Mucosa of descending colon (tissue), 3 donors: ENCODE measurements at regions of chr16 and their contacts with region 1.

Region 1: GRCh38 chr16:16127469-16128116 is 95.7 kb downstream of the ABCC6 start:
- DNase-seq: peak in 2 of 3 donors; percentile 76 to 77
- ATAC-seq: peak; percentile 96
- H3K4me3 ChIP-seq: no peak overlapping the region
- H3K4me1 ChIP-seq: no peaks in the 10 kb centered on the region
- CTCF ChIP-seq: peak; percentile 89

Region 2: GRCh38 chr16:15874745-15875314 is 252.8 kb before region 1 on chr16:
- intact Hi-C with region 1: loop called (anchors 10 kb)
- DNase-seq: peak in 2 of 3 donors; percentile 50 to 79
- ATAC-seq: peak; percentile 88
- H3K4me3 ChIP-seq: no peak overlapping the region
- H3K4me1 ChIP-seq: no peaks in the 10 kb centered on the region
- CTCF ChIP-seq: peak; percentile 20

Region 3: DNA sequence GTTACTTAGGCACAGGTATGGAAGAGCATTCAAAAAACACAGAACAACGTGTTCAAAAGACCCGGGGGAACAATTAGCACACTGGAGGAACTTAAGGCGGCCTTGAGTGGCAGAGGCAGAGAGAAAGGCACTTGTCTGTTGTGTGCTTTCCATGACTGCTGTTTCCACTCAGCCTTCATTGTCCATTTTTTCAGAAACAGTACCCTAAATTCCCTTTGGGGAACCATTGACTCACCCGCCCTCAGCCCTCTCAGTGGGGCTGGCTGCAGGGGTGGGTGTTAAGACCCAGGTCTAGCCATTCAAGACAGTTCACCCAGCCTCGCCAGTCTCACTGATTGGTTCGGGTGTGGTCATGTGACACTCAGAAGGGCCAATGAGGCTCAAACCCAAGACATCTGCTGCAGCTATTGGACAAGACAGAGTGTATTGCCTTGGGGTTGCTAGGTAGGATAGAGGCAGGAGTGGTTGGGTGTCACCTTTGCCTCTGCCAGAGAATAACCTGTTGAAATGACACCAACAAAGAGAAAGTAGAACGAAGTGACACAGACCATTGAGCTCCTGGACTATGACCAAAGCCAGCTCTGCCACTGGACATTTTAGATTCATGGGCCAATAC is 219.6 kb before region 1 on chr16:
- intact Hi-C with region 1: no loop called
- DNase-seq: no peak
- ATAC-seq: peak; percentile 97
- H3K4me3 ChIP-seq: no peak overlapping the region
- H3K4me1 ChIP-seq: peaks cover 2% of the 10 kb centered on the region
- CTCF ChIP-seq: no peak

Region 4: DNA sequence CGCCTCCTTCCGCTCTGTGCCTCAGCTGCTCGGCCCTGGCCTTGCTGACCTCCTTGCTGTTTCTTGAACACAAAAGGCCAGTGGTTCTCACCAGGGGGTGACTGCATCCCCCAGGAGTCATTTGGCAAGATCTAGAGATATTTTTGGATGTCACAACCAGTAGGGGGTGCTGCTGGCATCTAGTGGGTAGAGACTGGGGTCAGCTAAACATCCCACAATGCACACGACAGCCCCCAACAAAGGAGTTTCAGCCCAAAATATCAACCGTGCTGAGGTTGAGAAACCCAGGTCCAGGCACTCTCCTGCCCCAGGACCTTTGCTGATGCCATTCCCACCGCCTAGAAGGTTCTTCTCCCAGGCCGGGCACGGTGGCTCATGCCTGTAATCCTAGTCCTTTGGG is 56.0 kb after region 1 on chr16:
- intact Hi-C with region 1: no loop called
- DNase-seq: no peak
- ATAC-seq: no peak
- H3K4me3 ChIP-seq: no peak overlapping the region
- H3K4me1 ChIP-seq: no peaks in the 10 kb centered on the region
- CTCF ChIP-seq: no peak